ENCODE measurements at regions of chr1 and their contacts with region 1.

Region 1: GRCh38 chr1:18913065-18913835 is 10.9 kb upstream of the ALDH4A1 start:
- DNase-seq: peak; percentile 78
- ATAC-seq: peak; percentile 88
- H3K4me3 ChIP-seq: no peak overlapping the region
- H3K4me3 Mint-ChIP-seq: no peak overlapping the region
- H3K27ac ChIP-seq: no peak overlapping the region
- H3K27ac Mint-ChIP-seq: peak overlapping the region; percentile 56
- H3K4me1 ChIP-seq: peaks cover 7 to 16% of the 10 kb centered on the region in 2 donors
- H3K4me1 Mint-ChIP-seq: peaks cover 13% of the 10 kb centered on the region
- H3K27me3 ChIP-seq: no peaks in the 10 kb centered on the region
- H3K27me3 Mint-ChIP-seq: no peaks in the 10 kb centered on the region
- CTCF ChIP-seq: peak; percentile 89

Region 2: DNA sequence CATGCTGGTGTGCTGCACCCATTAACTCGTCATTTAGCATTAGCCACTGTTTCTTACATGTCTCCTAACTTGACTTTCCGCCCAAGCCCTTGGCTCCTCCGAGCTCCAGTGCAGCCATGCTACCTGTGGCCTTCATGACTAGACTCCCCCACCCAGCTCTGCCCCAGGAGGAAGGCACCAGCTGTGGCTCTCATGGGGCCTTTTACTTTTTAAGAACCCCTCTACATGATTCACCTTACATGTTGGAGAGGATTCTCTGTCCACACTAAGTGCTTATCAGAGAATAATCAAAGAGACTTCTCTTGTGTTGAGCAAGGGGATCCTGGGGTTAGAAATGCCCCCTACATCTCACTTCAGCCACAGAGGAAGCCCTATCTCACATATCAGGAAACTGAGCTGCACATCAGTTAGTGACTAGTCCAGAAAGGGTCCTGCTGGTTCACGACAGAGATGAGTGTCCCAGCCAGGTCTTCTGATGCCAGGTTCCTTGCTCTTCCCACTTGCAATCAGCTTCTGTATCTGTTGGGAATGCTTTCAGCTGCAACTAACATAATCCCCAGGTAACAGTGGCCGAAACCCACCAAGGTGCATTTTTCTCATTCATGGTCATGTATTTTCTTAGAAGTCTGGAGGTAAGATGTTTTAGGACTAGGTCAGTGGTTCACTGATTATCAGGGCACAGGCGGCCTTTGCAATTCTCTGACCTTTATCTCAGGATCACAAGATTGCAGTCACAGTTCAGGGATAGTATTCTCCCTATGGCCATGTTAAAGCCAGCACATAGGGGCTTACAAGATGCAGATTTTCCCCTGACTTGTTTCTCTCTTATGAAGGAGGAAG is 386.6 kb before region 1 on chr1:
- CTCF ChIA-PET with region 1: no interaction called
- POLR2A ChIA-PET with region 1: no interaction called
- intact Hi-C with region 1: no loop called
- DNase-seq: no peak
- ATAC-seq: no peak
- H3K4me3 ChIP-seq: no peak overlapping the region
- H3K4me3 Mint-ChIP-seq: no peak overlapping the region
- H3K27ac ChIP-seq: no peak overlapping the region
- H3K27ac Mint-ChIP-seq: no peak overlapping the region
- H3K4me1 ChIP-seq: no peaks in the 10 kb centered on the region
- H3K4me1 Mint-ChIP-seq: no peaks in the 10 kb centered on the region
- H3K27me3 ChIP-seq: peaks cover 0 to 2% (median 0%) of the 10 kb centered on the region in 4 experiments
- H3K27me3 Mint-ChIP-seq: peaks cover 21% of the 10 kb centered on the region
- CTCF ChIP-seq: no peak

Region 3: GRCh38 chr1:18893120-18893519 is 20.1 kb before region 1 on chr1:
- CTCF ChIA-PET with region 1: interaction called, 11 read pairs
- POLR2A ChIA-PET with region 1: no interaction called
- intact Hi-C with region 1: no loop called
- DNase-seq: no peak
- ATAC-seq: no peak
- H3K4me3 ChIP-seq: no peak overlapping the region
- H3K4me3 Mint-ChIP-seq: no peak overlapping the region
- H3K27ac ChIP-seq: no peak overlapping the region
- H3K27ac Mint-ChIP-seq: no peak overlapping the region
- H3K4me1 ChIP-seq: no peaks in the 10 kb centered on the region
- H3K4me1 Mint-ChIP-seq: no peaks in the 10 kb centered on the region
- H3K27me3 ChIP-seq: no peaks in the 10 kb centered on the region
- H3K27me3 Mint-ChIP-seq: no peaks in the 10 kb centered on the region
- CTCF ChIP-seq: no peak

Region 4: GRCh38 chr1:18941221-18942141 is 28.2 kb after region 1 on chr1:
- CTCF ChIA-PET with region 1: interaction called, 14 read pairs
- POLR2A ChIA-PET with region 1: interaction called, 4 read pairs
- intact Hi-C with region 1: no loop called
- DNase-seq: no peak
- ATAC-seq: no peak
- H3K4me3 ChIP-seq: no peak overlapping the region
- H3K4me3 Mint-ChIP-seq: no peak overlapping the region
- H3K27ac ChIP-seq: no peak overlapping the region
- H3K27ac Mint-ChIP-seq: no peak overlapping the region
- H3K4me1 ChIP-seq: peaks cover 18 to 37% of the 10 kb centered on the region in 2 donors
- H3K4me1 Mint-ChIP-seq: peaks cover 47% of the 10 kb centered on the region
- H3K27me3 ChIP-seq: no peaks in the 10 kb centered on the region
- H3K27me3 Mint-ChIP-seq: no peaks in the 10 kb centered on the region
- CTCF ChIP-seq: no peak

Region 5: DNA sequence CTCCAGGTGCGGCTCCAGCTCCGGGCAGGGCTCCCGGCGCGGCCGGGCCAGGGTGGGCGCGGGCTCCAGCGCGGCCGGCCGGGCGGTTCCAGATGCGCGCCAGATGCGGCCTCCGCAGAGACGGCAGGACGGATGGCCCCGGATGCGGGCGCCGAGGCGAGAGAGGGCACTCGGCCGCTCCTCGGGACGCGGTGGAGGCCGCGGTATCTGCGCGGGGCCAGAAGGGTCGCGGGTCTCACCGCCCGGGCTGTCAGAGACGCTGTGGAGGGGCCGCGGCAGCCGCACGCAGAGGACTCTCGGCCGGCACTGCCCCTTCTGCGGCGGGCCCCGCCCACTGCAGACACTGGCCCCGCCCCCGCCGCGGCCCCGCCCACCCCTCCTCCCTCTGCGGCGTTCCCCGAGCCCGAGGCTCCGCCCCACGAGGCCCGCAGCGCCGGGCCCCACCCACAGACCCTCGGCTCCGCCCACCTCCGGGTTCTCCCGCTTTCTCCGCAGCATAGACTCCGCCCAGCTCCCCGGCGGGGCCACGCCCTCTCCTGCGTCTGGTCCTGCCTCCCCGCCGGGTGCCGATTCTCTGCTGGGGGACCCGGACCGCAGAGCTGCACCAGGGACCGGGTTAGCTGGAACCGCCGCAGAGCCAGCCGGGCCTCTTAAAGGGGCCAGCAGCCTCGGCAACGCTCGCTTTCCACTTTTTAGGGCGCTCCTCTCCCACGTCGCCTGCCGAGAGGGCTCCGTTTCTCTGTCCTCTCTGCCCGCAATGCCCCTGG is 43.3 kb after region 1 on chr1 and contains the start of gene IFFO2:
- CTCF ChIA-PET with region 1: interaction called, 157 read pairs
- POLR2A ChIA-PET with region 1: interaction called, 5 read pairs
- intact Hi-C with region 1: no loop called
- DNase-seq: peak; percentile 97
- ATAC-seq: peak; percentile 88
- H3K4me3 ChIP-seq: peak within 1 kb of the TSS; percentile 33 to 73 (median 64)
- H3K4me3 Mint-ChIP-seq: peak within 1 kb of the TSS; percentile 90
- H3K27ac ChIP-seq: peak within 1 kb of the TSS in 1 of 2 donors; percentile 13
- H3K27ac Mint-ChIP-seq: peak within 1 kb of the TSS; percentile 78
- H3K4me1 ChIP-seq: peaks cover 50 to 53% of the 10 kb centered on the region in 2 donors
- H3K4me1 Mint-ChIP-seq: peaks cover 46% of the 10 kb centered on the region
- H3K27me3 ChIP-seq: peaks cover 0 to 10% (median 4%) of the 10 kb centered on the region in 4 experiments
- H3K27me3 Mint-ChIP-seq: peaks cover 9% of the 10 kb centered on the region
- CTCF ChIP-seq: no peak
- total RNA-seq, gene IFFO2: 15.4 and 16.8 TPM in 2 replicates

Region 6: GRCh38 chr1:18972531-18972930 is 59.3 kb after region 1 on chr1:
- CTCF ChIA-PET with region 1: interaction called, 194 read pairs
- POLR2A ChIA-PET with region 1: interaction called, 19 read pairs
- intact Hi-C with region 1: loop called (anchors 1 kb)
- DNase-seq: peak; percentile 63
- ATAC-seq: peak; percentile 39
- H3K4me3 ChIP-seq: no peak overlapping the region
- H3K4me3 Mint-ChIP-seq: no peak overlapping the region
- H3K27ac ChIP-seq: no peak overlapping the region
- H3K27ac Mint-ChIP-seq: no peak overlapping the region
- H3K4me1 ChIP-seq: no peaks in the 10 kb centered on the region
- H3K4me1 Mint-ChIP-seq: no peaks in the 10 kb centered on the region
- H3K27me3 ChIP-seq: no peaks in the 10 kb centered on the region
- H3K27me3 Mint-ChIP-seq: peaks cover 18% of the 10 kb centered on the region
- CTCF ChIP-seq: peak; percentile 69

Region 7: GRCh38 chr1:19317126-19317910 is 404.1 kb after region 1 on chr1:
- CTCF ChIA-PET with region 1: no interaction called
- POLR2A ChIA-PET with region 1: no interaction called
- intact Hi-C with region 1: no loop called
- DNase-seq: peak; percentile 12
- ATAC-seq: no peak
- H3K4me3 ChIP-seq: no peak overlapping the region
- H3K4me3 Mint-ChIP-seq: no peak overlapping the region
- H3K27ac ChIP-seq: no peak overlapping the region
- H3K27ac Mint-ChIP-seq: peak overlapping the region; percentile 65
- H3K4me1 ChIP-seq: peaks cover 53 to 55% of the 10 kb centered on the region in 2 donors
- H3K4me1 Mint-ChIP-seq: peaks cover 55% of the 10 kb centered on the region
- H3K27me3 ChIP-seq: no peaks in the 10 kb centered on the region
- H3K27me3 Mint-ChIP-seq: no peaks in the 10 kb centered on the region
- CTCF ChIP-seq: no peak

Measured in B cell (primary cell).